ENCODE measurements at regions of chr3 and their contacts with region 1.

Region 1: DNA sequence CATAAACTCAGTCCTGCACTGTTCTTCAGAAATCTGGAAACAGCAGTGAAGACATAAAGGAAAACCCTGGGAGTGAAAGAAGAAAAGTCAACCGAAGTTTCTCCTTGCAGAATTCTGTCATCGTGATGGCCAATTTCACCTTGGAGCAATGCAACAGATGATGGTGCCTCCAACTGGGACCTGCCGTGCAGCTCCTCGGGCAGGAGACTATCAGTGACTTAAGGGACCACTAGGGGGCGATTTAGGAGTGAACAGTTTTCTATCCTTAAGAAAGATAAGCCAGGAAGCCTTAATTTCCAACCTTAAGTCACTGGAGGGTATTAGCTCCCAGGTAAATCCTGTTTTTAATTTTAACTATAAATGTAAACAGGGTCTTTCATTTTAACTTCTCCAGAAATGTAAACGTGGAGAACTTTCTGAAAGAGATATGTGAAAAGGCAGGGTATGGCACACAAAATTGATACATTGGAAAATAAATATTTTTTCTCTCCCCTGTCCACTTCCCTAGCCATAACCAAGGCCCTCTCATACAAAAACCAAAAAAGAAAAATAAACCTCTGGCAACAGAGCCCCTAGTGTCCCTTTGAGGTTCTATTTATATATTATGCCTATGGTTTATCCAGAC is 116.3 kb downstream of the PDZRN3 start:
- DNase-seq: peak; percentile 44
- ATAC-seq: no peak
- H3K4me3 Mint-ChIP-seq: no peak overlapping the region
- H3K27ac Mint-ChIP-seq: no peak overlapping the region
- H3K4me1 Mint-ChIP-seq: no peaks in the 10 kb centered on the region
- H3K27me3 Mint-ChIP-seq: peaks cover 13% of the 10 kb centered on the region

Region 2: DNA sequence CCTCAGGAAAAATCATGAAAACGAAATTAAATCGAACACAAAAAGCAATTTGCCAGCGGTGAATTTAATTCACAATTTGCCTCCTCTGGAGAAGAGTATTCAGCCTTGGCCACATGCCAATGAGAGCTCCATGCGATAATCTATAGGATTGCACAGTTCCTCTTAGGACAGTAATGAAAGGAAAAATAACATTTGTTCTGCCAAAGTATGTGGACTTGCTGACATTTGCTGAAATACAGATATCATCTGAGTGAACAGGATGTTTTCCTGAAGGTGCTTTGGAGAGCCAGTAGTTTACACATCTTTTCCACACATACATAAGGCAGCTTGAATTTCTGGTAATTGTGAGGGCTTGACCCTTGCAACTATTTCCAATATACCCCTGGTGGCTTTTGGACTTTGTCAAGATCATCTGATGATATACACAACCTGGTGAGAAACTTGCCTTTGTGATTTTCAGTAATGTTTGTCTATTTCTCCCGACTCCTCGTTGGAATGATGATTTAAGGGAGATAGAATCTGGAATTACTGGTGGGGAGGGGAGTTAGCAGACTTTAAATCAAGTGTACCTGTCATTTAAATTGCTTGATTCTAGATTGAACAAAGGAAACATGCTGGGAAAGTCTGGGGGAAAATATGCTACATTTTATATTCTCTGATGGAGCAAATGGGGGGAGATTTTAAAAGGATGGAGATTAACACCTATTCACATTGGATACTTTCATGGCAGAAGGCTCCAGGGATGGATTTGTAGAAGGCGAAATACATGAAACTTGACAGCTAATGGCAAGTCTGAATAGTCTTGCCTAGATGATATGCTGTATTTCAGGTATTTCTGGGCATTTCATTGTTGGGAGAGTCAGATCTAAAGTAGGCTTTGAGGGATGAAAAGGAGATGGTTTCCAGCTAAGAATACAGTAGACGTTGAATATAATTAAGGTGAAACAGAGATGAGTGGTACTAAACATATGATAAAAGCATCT is 305.2 kb after region 1 on chr3:
- CTCF ChIA-PET with region 1: no interaction called
- POLR2A ChIA-PET with region 1: no interaction called
- intact Hi-C with region 1: loop called in 1 of 2 experiments (anchors 5 kb)
- DNase-seq: no peak
- ATAC-seq: no peak
- H3K4me3 Mint-ChIP-seq: no peak overlapping the region
- H3K27ac Mint-ChIP-seq: no peak overlapping the region
- H3K4me1 Mint-ChIP-seq: no peaks in the 10 kb centered on the region
- H3K27me3 Mint-ChIP-seq: no peaks in the 10 kb centered on the region

Region 3: DNA sequence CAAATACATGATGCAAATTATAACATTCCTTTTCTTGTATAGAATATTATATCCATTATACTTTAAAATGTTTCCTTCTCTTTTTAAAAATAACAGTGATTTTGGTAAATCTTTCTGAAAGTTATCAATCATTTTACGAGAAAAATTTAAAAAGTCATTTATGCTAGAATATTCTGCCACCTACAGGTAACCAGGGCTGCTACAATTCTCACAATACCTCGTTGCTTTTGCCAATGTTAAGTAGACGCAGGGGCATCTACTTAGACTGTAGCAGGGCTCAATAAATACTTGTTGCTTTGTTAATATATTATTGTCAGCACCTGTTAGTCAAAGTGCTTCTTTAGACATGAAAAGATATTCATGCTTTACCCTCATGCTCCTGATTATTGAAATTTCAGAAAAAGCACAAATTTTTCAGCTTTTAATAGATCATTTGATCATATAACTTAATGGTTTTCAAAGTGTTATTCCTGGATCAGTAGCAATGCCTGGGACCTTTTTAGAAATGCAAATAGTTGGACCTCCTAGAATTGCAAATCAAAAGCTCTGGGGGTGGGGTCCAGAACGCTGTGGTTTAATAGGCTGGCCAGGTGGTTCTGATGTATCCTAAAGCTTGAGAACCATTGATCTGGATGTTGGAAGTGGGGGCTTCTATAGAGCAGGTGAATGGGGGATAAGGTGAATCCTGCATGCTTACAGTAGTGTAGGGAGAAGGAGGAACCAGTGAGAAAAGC is 339.9 kb after region 1 on chr3:
- CTCF ChIA-PET with region 1: no interaction called
- POLR2A ChIA-PET with region 1: no interaction called
- intact Hi-C with region 1: loop called in 1 of 2 experiments (anchors 1 kb)
- DNase-seq: no peak
- ATAC-seq: no peak
- H3K4me3 Mint-ChIP-seq: no peak overlapping the region
- H3K27ac Mint-ChIP-seq: no peak overlapping the region
- H3K4me1 Mint-ChIP-seq: no peaks in the 10 kb centered on the region
- H3K27me3 Mint-ChIP-seq: peaks cover 2% of the 10 kb centered on the region

Region 4: GRCh38 chr3:74067296-74067695 is 558.9 kb after region 1 on chr3:
- CTCF ChIA-PET with region 1: no interaction called
- POLR2A ChIA-PET with region 1: no interaction called
- intact Hi-C with region 1: no loop called
- DNase-seq: no peak
- ATAC-seq: no peak
- H3K4me3 Mint-ChIP-seq: no peak overlapping the region
- H3K27ac Mint-ChIP-seq: no peak overlapping the region
- H3K4me1 Mint-ChIP-seq: no peaks in the 10 kb centered on the region
- H3K27me3 Mint-ChIP-seq: no peaks in the 10 kb centered on the region

Region 5: DNA sequence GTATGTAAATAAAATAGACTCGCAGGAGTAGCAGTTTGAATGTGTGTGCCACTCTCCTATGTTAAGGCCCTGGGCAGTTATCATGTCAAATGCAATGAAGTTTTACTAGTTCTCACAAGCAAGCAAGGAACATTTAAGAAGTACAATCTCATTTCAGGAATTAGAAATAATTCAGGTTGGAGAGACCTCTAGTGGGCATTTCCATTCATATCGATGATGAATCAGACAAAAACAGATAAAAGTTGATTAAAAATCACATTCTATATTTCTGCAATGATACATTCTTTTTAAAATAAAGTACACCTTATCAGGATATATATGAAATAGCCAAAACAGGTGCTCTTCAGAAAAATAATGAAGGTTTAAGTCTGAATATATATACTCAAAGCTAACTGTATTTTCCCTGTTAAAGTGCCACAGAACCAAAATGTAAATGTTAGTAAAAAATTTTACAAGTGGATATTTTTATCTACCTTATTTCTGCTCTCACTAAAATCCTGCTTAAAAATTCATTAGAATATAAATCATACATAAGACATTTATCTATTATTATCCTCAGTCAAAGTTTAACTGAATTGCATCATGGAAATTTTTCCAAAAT is 1663.3 kb after region 1 on chr3:
- CTCF ChIA-PET with region 1: no interaction called
- POLR2A ChIA-PET with region 1: no interaction called
- intact Hi-C with region 1: loop called in 1 of 2 experiments (anchors 5 kb)
- DNase-seq: no peak
- ATAC-seq: no peak
- H3K4me3 Mint-ChIP-seq: no peak overlapping the region
- H3K27ac Mint-ChIP-seq: no peak overlapping the region
- H3K4me1 Mint-ChIP-seq: no peaks in the 10 kb centered on the region
- H3K27me3 Mint-ChIP-seq: peaks cover 3% of the 10 kb centered on the region